Activated CD8-positive, alpha-beta memory T cell treated with anti-CD3 and anti-CD28 coated beads, Interleukin-2, amount 10 ng/mL, durations not matched to agents 7 days and 5 days (primary cell): ENCODE measurements at regions of chr10 and their contacts with region 1.

Region 1: GRCh38 chr10:86899670-86900276 is 57.6 kb downstream of the MMRN2 start:
- DNase-seq: peak; percentile 58
- ATAC-seq: peak; percentile 68
- H3K4me3 Mint-ChIP-seq: no peak overlapping the region
- H3K27ac Mint-ChIP-seq: no peak overlapping the region
- H3K4me1 Mint-ChIP-seq: no peaks in the 10 kb centered on the region
- H3K27me3 Mint-ChIP-seq: no peaks in the 10 kb centered on the region

Region 2: GRCh38 chr10:86693721-86694369 is 205.9 kb before region 1 on chr10:
- CTCF ChIA-PET with region 1: interaction called, 12 read pairs
- DNase-seq: peak; percentile 56
- ATAC-seq: peak; percentile 68
- H3K4me3 Mint-ChIP-seq: no peak overlapping the region
- H3K27ac Mint-ChIP-seq: no peak overlapping the region
- H3K4me1 Mint-ChIP-seq: peaks cover 2% of the 10 kb centered on the region
- H3K27me3 Mint-ChIP-seq: peaks cover 5% of the 10 kb centered on the region